OCI-LY7 (cell line): ENCODE measurements at regions of chr13 and their contacts with region 1.

Region 1: GRCh38 chr13:29472332-29472961 is 123.0 kb downstream of the SLC7A1 start:
- DNase-seq: peak; percentile 88
- H3K4me3 ChIP-seq: no peak overlapping the region
- H3K27ac ChIP-seq: no peak overlapping the region
- H3K4me1 ChIP-seq: peaks cover 19% of the 10 kb centered on the region
- CTCF ChIP-seq: peak; percentile 100

Region 2: GRCh38 chr13:28805193-28805819 is 667.1 kb before region 1 on chr13:
- CTCF ChIA-PET with region 1: no interaction called
- POLR2A ChIA-PET with region 1: no interaction called
- intact Hi-C with region 1: loop called (anchors 10 kb)
- DNase-seq: peak; percentile 35
- H3K4me3 ChIP-seq: no peak overlapping the region
- H3K27ac ChIP-seq: no peak overlapping the region
- H3K4me1 ChIP-seq: no peaks in the 10 kb centered on the region
- CTCF ChIP-seq: peak; percentile 82

Region 3: GRCh38 chr13:29239653-29240525 is 232.6 kb before region 1 on chr13:
- CTCF ChIA-PET with region 1: no interaction called
- POLR2A ChIA-PET with region 1: no interaction called
- intact Hi-C with region 1: no loop called
- DNase-seq: no peak
- H3K4me3 ChIP-seq: no peak overlapping the region
- H3K27ac ChIP-seq: no peak overlapping the region
- H3K4me1 ChIP-seq: no peaks in the 10 kb centered on the region
- CTCF ChIP-seq: no peak

Region 4: DNA sequence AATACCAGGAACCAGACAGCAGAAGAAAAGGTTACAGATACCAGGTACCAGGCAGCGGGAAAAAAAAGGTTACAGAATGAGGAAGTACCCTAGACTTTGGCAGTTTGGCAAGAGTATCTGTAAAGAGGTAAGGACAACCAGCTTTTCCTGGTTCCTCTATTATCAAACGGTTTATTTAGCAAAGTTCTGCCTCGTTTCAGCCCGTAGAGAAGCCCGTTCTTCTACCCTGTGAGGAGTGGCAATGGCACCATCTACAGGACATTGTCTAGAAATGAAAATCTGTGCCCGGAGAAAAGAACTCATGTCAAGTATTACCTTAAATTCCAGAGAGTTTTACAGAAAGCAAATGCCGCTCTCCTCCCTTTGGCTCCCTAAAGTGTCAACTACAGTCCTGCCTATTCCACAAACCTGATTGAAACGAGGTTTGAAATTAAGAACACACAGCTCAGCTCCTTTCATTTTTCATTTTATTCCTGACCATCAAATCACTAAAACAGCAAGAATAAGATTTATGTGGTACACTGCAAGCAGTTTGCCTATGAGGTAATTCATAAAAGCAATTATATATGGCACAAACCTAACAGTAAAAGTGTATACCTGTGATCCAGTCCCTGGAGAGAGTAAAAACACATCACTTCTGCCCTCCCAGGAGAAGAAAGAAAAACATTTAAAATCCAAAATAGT is 103.2 kb before region 1 on chr13:
- CTCF ChIA-PET with region 1: interaction called, 3 read pairs
- POLR2A ChIA-PET with region 1: interaction called, 3 read pairs
- intact Hi-C with region 1: loop called (anchors 1 kb)
- DNase-seq: peak; percentile 75
- H3K4me3 ChIP-seq: no peak overlapping the region
- H3K27ac ChIP-seq: peak overlapping the region; percentile 5
- H3K4me1 ChIP-seq: peaks cover 12% of the 10 kb centered on the region
- CTCF ChIP-seq: peak; percentile 84

Region 5: DNA sequence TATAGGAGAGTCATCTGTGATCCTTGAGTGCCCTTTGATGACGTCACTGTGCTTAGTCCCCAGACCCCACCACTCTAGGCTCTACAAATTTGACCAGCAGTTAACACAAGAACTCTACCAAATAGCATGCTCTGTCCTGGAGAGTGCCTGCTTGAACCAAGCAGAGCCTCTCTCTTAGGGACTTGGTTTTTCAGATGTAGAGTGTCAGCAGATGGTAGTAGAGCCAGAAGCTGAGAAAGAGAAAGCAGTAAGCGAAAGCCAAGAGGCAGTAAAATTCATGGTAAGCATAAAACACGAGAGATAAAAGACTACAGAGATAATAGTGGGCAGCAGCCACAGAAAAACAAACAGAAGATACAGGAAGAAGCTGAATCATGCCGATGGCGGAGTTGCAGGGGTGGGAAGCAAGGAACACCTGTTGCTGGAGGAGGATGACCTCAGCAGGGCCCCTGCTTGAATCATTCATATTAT is 70.2 kb before region 1 on chr13:
- CTCF ChIA-PET with region 1: no interaction called
- POLR2A ChIA-PET with region 1: no interaction called
- intact Hi-C with region 1: no loop called
- DNase-seq: no peak
- H3K4me3 ChIP-seq: no peak overlapping the region
- H3K27ac ChIP-seq: no peak overlapping the region
- H3K4me1 ChIP-seq: no peaks in the 10 kb centered on the region
- CTCF ChIP-seq: no peak

Region 6: DNA sequence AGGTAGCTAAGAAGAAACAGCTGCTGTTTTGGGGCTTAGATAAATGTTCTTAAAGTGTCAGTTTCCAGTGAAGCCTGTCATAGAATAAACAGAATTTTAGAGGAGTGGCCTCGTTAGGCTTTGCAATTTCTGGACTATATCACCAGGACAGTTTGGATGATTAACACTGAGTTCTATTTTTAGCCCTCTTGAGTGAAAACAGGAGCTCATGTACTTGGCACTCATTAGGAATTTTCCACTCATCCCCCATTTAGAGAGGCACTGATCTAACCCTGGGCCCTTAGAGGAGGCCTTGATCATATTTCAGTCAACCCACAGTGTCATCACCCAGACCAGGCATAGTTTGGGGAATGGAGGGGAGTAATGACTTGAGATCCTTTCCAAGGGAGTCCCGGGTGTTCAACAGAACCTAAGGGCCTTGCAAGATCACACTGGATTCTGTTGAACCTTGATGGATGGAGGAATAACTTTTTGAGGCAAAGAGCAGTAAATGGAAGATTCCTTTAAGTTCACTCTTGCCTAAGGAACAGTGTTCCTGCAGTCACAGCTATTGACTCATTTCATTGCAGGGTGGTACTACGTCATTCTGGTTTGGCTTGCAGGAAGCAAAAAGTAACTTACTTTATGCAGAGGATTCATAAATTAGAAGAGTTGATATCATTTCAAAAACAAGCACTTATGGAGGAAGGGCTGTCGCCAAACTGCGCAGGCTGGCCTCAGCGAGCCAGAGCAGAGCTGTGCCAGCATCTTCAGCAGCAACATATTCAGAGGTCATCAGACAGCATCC is 37.1 kb before region 1 on chr13:
- CTCF ChIA-PET with region 1: no interaction called
- POLR2A ChIA-PET with region 1: interaction called, 8 read pairs
- intact Hi-C with region 1: loop called (anchors 1 kb)
- DNase-seq: no peak
- H3K4me3 ChIP-seq: peak overlapping the region; percentile 25
- H3K27ac ChIP-seq: peak overlapping the region; percentile 95
- H3K4me1 ChIP-seq: peaks cover 55% of the 10 kb centered on the region
- CTCF ChIP-seq: no peak

Region 7: DNA sequence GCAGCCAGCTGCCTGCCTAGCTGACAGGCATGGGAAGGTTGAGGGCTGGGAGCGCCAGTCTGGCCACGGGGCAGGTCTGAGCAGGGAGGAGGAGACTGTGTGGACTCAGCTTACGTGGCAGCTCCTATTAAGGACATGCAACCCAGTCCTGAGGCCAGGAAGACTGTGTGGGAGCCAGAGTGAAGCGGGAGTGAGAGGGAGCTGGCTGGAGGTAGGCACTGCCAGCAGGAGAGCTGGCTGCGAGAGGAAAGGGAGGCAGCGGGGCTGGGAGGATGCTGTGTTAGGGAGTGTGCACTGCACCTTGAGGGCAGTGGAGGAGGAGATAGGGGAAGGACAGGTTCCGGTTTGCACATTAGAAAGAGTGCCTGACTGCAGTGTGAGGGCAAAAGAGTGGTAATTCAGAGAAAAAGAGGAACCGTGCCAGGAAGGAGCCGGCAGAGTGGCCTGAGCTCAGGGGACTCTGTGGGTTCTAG is 23.8 kb after region 1 on chr13:
- CTCF ChIA-PET with region 1: no interaction called
- POLR2A ChIA-PET with region 1: interaction called, 3 read pairs
- intact Hi-C with region 1: loop called (anchors 2 kb)
- DNase-seq: peak; percentile 69
- H3K4me3 ChIP-seq: peak overlapping the region; percentile 2
- H3K27ac ChIP-seq: no peak overlapping the region
- H3K4me1 ChIP-seq: peaks cover 33% of the 10 kb centered on the region
- CTCF ChIP-seq: no peak

Region 8: GRCh38 chr13:29508130-29508875 is 35.9 kb after region 1 on chr13:
- CTCF ChIA-PET with region 1: no interaction called
- POLR2A ChIA-PET with region 1: no interaction called
- intact Hi-C with region 1: no loop called
- DNase-seq: peak; percentile 74
- H3K4me3 ChIP-seq: no peak overlapping the region
- H3K27ac ChIP-seq: no peak overlapping the region
- H3K4me1 ChIP-seq: no peaks in the 10 kb centered on the region
- CTCF ChIP-seq: peak; percentile 97